Activated CD8-positive, alpha-beta memory T cell treated with anti-CD3 and anti-CD28 coated beads, Interleukin-2, amount 10 ng/mL, durations not matched to agents 7 days and 5 days (primary cell): ENCODE measurements at regions of chr12 and their contacts with region 1.

Region 1: GRCh38 chr12:53675651-53676453 is at the start of gene ATP5MC2:
- DNase-seq: peak; percentile 98
- ATAC-seq: peak; percentile 97
- H3K4me3 Mint-ChIP-seq: peak within 1 kb of the TSS; percentile 87
- H3K27ac Mint-ChIP-seq: peak within 1 kb of the TSS; percentile 90
- H3K4me1 Mint-ChIP-seq: peaks cover 40% of the 10 kb centered on the region
- H3K27me3 Mint-ChIP-seq: peaks cover 29% of the 10 kb centered on the region
- total RNA-seq, gene ATP5MC2: 253 to 333 TPM

Region 2: GRCh38 chr12:53538196-53538689 is 137.6 kb before region 1 on chr12:
- CTCF ChIA-PET with region 1: interaction called, 77 read pairs
- DNase-seq: no peak
- ATAC-seq: no peak
- H3K4me3 Mint-ChIP-seq: no peak overlapping the region
- H3K27ac Mint-ChIP-seq: no peak overlapping the region
- H3K4me1 Mint-ChIP-seq: no peaks in the 10 kb centered on the region
- H3K27me3 Mint-ChIP-seq: no peaks in the 10 kb centered on the region

Region 3: GRCh38 chr12:53625946-53626701 is 49.7 kb before region 1 on chr12 and contains the start of gene ATF7:
- CTCF ChIA-PET with region 1: interaction called, 10 read pairs
- DNase-seq: peak; percentile 99
- ATAC-seq: peak; percentile 98
- H3K4me3 Mint-ChIP-seq: peak within 1 kb of the TSS; percentile 97
- H3K27ac Mint-ChIP-seq: peak within 1 kb of the TSS; percentile 92
- H3K4me1 Mint-ChIP-seq: peaks cover 46% of the 10 kb centered on the region
- H3K27me3 Mint-ChIP-seq: no peaks in the 10 kb centered on the region
- total RNA-seq, gene ATF7: 24.6 to 33.8 TPM

Region 4: GRCh38 chr12:53727310-53728041 is 51.6 kb after region 1 on chr12 and contains the start of gene CALCOCO1:
- CTCF ChIA-PET with region 1: interaction called, 15 read pairs
- DNase-seq: peak; percentile 99
- ATAC-seq: peak; percentile 98
- H3K4me3 Mint-ChIP-seq: peak within 1 kb of the TSS; percentile 87
- H3K27ac Mint-ChIP-seq: peak within 1 kb of the TSS; percentile 90
- H3K4me1 Mint-ChIP-seq: peaks cover 26% of the 10 kb centered on the region
- H3K27me3 Mint-ChIP-seq: peaks cover 2% of the 10 kb centered on the region
- total RNA-seq, gene CALCOCO1: 39.0 to 40.0 TPM

Region 5: GRCh38 chr12:53757095-53757770 is 81.4 kb after region 1 on chr12:
- CTCF ChIA-PET with region 1: interaction called, 20 read pairs
- DNase-seq: peak; percentile 92
- ATAC-seq: peak; percentile 93
- H3K4me3 Mint-ChIP-seq: peak overlapping the region; percentile 52
- H3K27ac Mint-ChIP-seq: peak overlapping the region; percentile 70
- H3K4me1 Mint-ChIP-seq: peaks cover 19% of the 10 kb centered on the region
- H3K27me3 Mint-ChIP-seq: peaks cover 40% of the 10 kb centered on the region

Region 6: GRCh38 chr12:53867216-53868001 is 191.6 kb after region 1 on chr12:
- CTCF ChIA-PET with region 1: no interaction called
- DNase-seq: no peak
- ATAC-seq: no peak
- H3K4me3 Mint-ChIP-seq: no peak overlapping the region
- H3K27ac Mint-ChIP-seq: no peak overlapping the region
- H3K4me1 Mint-ChIP-seq: no peaks in the 10 kb centered on the region
- H3K27me3 Mint-ChIP-seq: peaks cover 27% of the 10 kb centered on the region